ENCODE measurements at regions of chr6 and their contacts with region 1.

Region 1: DNA sequence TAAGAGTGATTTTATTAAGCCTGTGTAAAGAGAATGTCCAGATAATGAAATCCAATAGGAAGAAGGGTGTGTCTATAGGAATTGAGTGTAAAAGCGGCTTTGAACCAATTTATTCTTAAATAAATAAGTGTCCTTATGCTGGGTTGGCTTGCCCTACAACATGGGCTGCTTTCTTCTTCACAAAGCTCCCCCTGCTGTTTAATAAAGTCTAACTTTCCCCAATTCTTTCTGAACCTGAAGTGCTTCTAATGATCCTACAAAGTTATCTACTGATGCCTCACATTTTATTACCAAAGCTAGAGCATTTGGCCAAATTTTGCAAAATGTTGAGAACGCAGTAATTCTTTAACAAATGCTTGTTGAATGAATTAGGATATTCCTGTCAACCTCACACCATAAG is 36.3 kb upstream of the SIRT5 start:
- DNase-seq: peak; percentile 22
- H3K4me3 ChIP-seq: no peak overlapping the region
- H3K27ac ChIP-seq: no peak overlapping the region
- H3K4me1 ChIP-seq: no peaks in the 10 kb centered on the region
- H3K27me3 ChIP-seq: no peaks in the 10 kb centered on the region
- CTCF ChIP-seq: peak; percentile 10 to 48

Region 2: GRCh38 chr6:12903246-12903645 is 634.8 kb before region 1 on chr6:
- CTCF ChIA-PET with region 1: no interaction called
- dilution Hi-C with region 1: no loop called
- in situ Hi-C with region 1: loop called in 1 of 2 experiments (anchors 25 kb)
- intact Hi-C with region 1: loop called (anchors 10 kb)
- DNase-seq: no peak
- H3K4me3 ChIP-seq: no peak overlapping the region
- H3K27ac ChIP-seq: no peak overlapping the region
- H3K4me1 ChIP-seq: no peaks in the 10 kb centered on the region
- H3K27me3 ChIP-seq: peaks cover 2% of the 10 kb centered on the region
- CTCF ChIP-seq: no peak

Region 3: DNA sequence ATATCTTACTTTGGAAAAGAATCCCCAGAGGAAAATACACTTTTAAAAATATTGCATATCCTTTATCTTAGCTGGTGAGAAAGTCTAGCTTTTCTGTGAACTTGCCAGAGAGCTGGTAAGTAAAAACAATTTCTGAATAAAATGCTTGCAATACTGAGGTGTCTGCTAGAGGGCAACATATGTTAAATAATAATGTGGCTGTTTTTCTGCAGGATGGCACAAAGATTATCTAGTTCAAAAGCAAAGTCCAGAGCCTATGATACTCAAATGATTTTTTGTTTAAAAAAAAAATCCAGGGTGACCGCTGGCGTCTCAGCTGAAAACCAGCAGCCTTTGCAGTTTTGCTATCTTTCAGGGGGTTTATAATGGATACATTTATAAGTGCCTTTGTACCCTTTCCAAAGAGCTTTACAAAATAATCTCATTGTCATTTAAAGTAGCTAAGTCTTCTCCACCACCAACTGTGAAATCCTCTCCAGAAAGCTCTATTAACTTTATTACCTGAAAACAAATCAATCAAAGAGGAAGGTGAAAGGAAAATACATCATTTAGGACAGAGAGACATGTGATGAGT is 626.6 kb before region 1 on chr6:
- CTCF ChIA-PET with region 1: no interaction called
- dilution Hi-C with region 1: no loop called
- in situ Hi-C with region 1: loop called in 1 of 2 experiments (anchors 25 kb)
- intact Hi-C with region 1: loop called (anchors 10 kb)
- DNase-seq: peak; percentile 3
- H3K4me3 ChIP-seq: no peak overlapping the region
- H3K27ac ChIP-seq: no peak overlapping the region
- H3K4me1 ChIP-seq: no peaks in the 10 kb centered on the region
- H3K27me3 ChIP-seq: peaks cover 2% of the 10 kb centered on the region
- CTCF ChIP-seq: peak; percentile 30 to 46

Region 4: GRCh38 chr6:13383328-13384163 is 154.5 kb before region 1 on chr6:
- CTCF ChIA-PET with region 1: no interaction called
- dilution Hi-C with region 1: no loop called
- in situ Hi-C with region 1: no loop called
- intact Hi-C with region 1: loop called (anchors 1 kb)
- DNase-seq: peak; percentile 69
- H3K4me3 ChIP-seq: no peak overlapping the region
- H3K27ac ChIP-seq: peak overlapping the region; percentile 29
- H3K4me1 ChIP-seq: no peaks in the 10 kb centered on the region
- H3K27me3 ChIP-seq: no peaks in the 10 kb centered on the region
- CTCF ChIP-seq: peak in 1 of 2 donors; percentile 42

Region 5: GRCh38 chr6:13413900-13414555 is 124.1 kb before region 1 on chr6:
- CTCF ChIA-PET with region 1: no interaction called
- dilution Hi-C with region 1: no loop called
- in situ Hi-C with region 1: no loop called
- intact Hi-C with region 1: loop called (anchors 2 kb)
- DNase-seq: no peak
- H3K4me3 ChIP-seq: no peak overlapping the region
- H3K27ac ChIP-seq: no peak overlapping the region
- H3K4me1 ChIP-seq: no peaks in the 10 kb centered on the region
- H3K27me3 ChIP-seq: no peaks in the 10 kb centered on the region
- CTCF ChIP-seq: no peak

Region 6: GRCh38 chr6:13487122-13488014 is 50.7 kb before region 1 on chr6 and contains the start of gene GFOD1:
- CTCF ChIA-PET with region 1: no interaction called
- dilution Hi-C with region 1: no loop called
- in situ Hi-C with region 1: no loop called
- intact Hi-C with region 1: loop called (anchors 2 kb)
- DNase-seq: peak; percentile 85
- H3K4me3 ChIP-seq: peak within 1 kb of the TSS; percentile 66 to 73 (median 70)
- H3K27ac ChIP-seq: peak within 1 kb of the TSS; percentile 61
- H3K4me1 ChIP-seq: peaks cover 22% of the 10 kb centered on the region
- H3K27me3 ChIP-seq: no peaks in the 10 kb centered on the region
- CTCF ChIP-seq: peak in 1 of 2 donors; percentile 35
- total RNA-seq, gene GFOD1: 12.3 to 37.3 TPM

Region 7: GRCh38 chr6:13574149-13574570 is 36.1 kb after region 1 on chr6:
- CTCF ChIA-PET with region 1: no interaction called
- dilution Hi-C with region 1: no loop called
- in situ Hi-C with region 1: no loop called
- intact Hi-C with region 1: loop called (anchors 1 kb)
- DNase-seq: peak; percentile 92
- H3K4me3 ChIP-seq: peak overlapping the region; percentile 61 to 92 (median 77)
- H3K27ac ChIP-seq: peak overlapping the region; percentile 92
- H3K4me1 ChIP-seq: peaks cover 9% of the 10 kb centered on the region
- H3K27me3 ChIP-seq: no peaks in the 10 kb centered on the region
- CTCF ChIP-seq: peak; percentile 15 to 55